ENCODE measurements at regions of chr6 and their contacts with region 1.

Region 1: GRCh38 chr6:110053395-110054240 is 75.5 kb downstream of the GPR6 start:
- DNase-seq: no peak
- ATAC-seq: peak; percentile 61
- H3K4me3 ChIP-seq: no peak overlapping the region
- H3K27ac ChIP-seq: no peak overlapping the region
- H3K4me1 ChIP-seq: no peaks in the 10 kb centered on the region
- H3K27me3 ChIP-seq: no peaks in the 10 kb centered on the region; a peak in 1 of 4 replicates
- CTCF ChIP-seq: peak; percentile 53 to 69 (median 67); a peak in 5 of 6 replicates
- EP300 ChIP-seq: no peak
- POLR2A ChIP-seq: no peak
- RAD21 ChIP-seq: peak; percentile 61

Region 2: GRCh38 chr6:109187399-109188114 is 866.1 kb before region 1 on chr6:
- CTCF ChIA-PET with region 1: no interaction called
- POLR2A ChIA-PET with region 1: no interaction called
- RAD21 ChIA-PET with region 1: no interaction called
- SMC1A ChIA-PET with region 1: no interaction called
- in situ Hi-C with region 1: no loop called
- intact Hi-C with region 1: loop called (anchors 10 kb)
- DNase-seq: no peak
- ATAC-seq: peak; percentile 87
- H3K4me3 ChIP-seq: no peak overlapping the region
- H3K27ac ChIP-seq: no peak overlapping the region
- H3K4me1 ChIP-seq: no peaks in the 10 kb centered on the region
- H3K27me3 ChIP-seq: no peaks in the 10 kb centered on the region; a peak in 1 of 4 replicates
- CTCF ChIP-seq: peak; percentile 86 to 91 (median 90)
- EP300 ChIP-seq: no peak
- POLR2A ChIP-seq: no peak
- RAD21 ChIP-seq: peak; percentile 94

Region 3: DNA sequence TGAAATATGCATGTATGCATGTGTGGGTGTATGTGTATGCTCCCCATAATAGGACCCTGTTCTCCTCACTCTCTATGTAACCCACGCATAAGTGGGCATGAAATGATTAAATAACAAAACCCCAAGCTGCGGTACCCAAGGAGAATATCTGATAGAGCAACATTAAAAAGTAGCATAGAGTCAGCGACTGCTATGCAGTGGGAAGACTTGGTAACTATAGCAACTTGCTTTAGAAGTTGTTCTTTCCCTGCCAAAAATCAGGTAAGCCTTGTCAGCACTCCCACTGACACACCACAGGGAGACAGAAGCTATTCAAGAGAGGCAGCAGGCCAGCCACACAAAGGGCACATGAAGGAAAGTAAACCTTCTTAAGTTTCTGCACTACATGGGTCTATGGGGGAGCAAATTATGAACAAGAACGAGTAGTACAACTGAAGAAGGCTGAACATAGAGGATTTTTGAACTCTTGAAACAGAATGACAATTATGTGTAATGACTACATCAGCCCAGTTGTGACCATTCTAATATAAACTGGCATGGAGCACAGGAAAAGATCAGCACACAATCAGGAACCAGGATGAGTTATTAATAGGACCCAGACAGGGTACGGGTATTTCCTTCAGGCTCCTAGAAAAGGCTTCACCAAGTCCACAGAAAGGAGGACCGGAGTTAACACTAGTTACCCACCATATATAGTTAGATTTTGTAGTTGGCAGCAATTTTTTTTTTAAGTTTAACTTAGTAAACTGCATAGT is 14.4 kb after region 1 on chr6:
- CTCF ChIA-PET with region 1: no interaction called
- POLR2A ChIA-PET with region 1: no interaction called
- RAD21 ChIA-PET with region 1: no interaction called
- SMC1A ChIA-PET with region 1: no interaction called
- in situ Hi-C with region 1: no loop called
- intact Hi-C with region 1: no loop called
- DNase-seq: no peak
- ATAC-seq: no peak
- H3K4me3 ChIP-seq: no peak overlapping the region
- H3K27ac ChIP-seq: no peak overlapping the region
- H3K4me1 ChIP-seq: peaks cover 11% of the 10 kb centered on the region; the same call in 1 of the 2 replicates
- H3K27me3 ChIP-seq: no peaks in the 10 kb centered on the region
- CTCF ChIP-seq: no peak
- EP300 ChIP-seq: no peak
- POLR2A ChIP-seq: no peak
- RAD21 ChIP-seq: no peak